ENCODE measurements at regions of chr20 and their contacts with region 1.

Region 1: DNA sequence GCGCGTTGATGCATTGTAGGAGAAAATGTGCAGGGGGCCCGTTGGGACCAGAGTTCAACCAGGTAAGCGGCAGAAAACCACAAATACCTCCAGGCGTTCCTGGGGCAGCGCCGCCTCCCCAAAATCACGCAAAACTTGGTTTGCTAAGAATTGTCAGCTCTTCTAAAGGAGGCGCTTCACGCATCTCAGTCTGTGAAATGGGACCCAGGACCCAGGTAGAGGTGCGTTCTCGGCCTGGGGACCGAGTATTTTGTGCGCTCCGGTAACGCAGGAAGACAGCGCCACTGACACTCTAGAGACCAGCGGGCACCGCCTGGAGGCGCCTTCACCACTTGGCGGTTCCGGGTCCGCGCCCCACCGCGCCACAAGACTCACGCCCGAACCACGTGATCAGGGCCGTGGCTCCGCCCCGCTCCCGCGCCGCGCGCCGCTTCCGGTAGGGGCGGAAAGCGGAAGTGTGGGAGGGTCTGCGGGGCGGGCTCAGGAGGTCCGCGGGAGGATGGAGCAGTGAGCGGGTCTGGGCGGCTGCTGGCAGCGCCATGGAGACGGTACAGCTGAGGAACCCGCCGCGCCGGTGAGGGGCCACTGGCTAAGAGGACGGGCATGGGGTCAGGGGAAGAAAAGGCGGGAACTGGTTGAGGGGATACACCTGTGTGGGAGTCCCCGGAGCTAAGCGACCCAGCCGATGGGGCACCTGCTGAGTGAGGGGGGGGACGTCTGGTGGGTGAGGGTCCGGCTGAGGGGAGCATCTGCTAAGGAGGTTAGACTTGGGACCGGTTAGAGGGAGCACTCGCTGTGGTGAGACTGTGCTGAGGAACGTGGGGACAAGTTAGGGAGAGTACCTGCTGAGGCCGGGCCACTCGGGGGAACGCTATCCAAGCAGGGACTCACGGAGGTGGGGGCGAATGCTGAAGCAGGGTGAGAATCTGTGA is at the start of gene STK4:
- DNase-seq: peak; percentile 88 to 95 (median 93)
- H3K4me3 ChIP-seq: peak within 1 kb of the TSS; percentile 60 to 98 (median 90)
- H3K27ac ChIP-seq: peak within 1 kb of the TSS; percentile 32 to 98 (median 91)
- H3K27me3 ChIP-seq: no peaks in the 10 kb centered on the region
- CTCF ChIP-seq: peak; percentile 49 to 89 (median 78)
- total RNA-seq, gene STK4: 31.0 to 66.4 (median 42.5) TPM

Region 2: GRCh38 chr20:44747166-44748004 is 218.9 kb before region 1 on chr20:
- intact Hi-C with region 1: loop called in 1 of 2 experiments (anchors 10 kb)
- DNase-seq: peak; percentile 61 to 94 (median 84)
- H3K4me3 ChIP-seq: peak overlapping the region in 1 of 59 donors; percentile 2
- H3K27ac ChIP-seq: peak overlapping the region in 5 of 59 donors; percentile 1 to 50 (median 31)
- H3K27me3 ChIP-seq: peaks cover 0 to 13% (median 0%) of the 10 kb centered on the region in 45 donors
- CTCF ChIP-seq: peak; percentile 52 to 83 (median 72)

Region 3: GRCh38 chr20:44885392-44886265 is 80.7 kb before region 1 on chr20 and contains the start of gene YWHAB:
- intact Hi-C with region 1: loop called (anchors 5 kb)
- DNase-seq: peak; percentile 90 to 98 (median 96)
- H3K4me3 ChIP-seq: peak within 1 kb of the TSS; percentile 70 to 100 (median 97)
- H3K27ac ChIP-seq: peak within 1 kb of the TSS; percentile 26 to 97 (median 92)
- H3K27me3 ChIP-seq: no peaks in the 10 kb centered on the region
- CTCF ChIP-seq: peak in 12 of 56 donors; percentile 5 to 43 (median 14)
- total RNA-seq, gene YWHAB: 122 to 473 (median 343) TPM

Region 4: DNA sequence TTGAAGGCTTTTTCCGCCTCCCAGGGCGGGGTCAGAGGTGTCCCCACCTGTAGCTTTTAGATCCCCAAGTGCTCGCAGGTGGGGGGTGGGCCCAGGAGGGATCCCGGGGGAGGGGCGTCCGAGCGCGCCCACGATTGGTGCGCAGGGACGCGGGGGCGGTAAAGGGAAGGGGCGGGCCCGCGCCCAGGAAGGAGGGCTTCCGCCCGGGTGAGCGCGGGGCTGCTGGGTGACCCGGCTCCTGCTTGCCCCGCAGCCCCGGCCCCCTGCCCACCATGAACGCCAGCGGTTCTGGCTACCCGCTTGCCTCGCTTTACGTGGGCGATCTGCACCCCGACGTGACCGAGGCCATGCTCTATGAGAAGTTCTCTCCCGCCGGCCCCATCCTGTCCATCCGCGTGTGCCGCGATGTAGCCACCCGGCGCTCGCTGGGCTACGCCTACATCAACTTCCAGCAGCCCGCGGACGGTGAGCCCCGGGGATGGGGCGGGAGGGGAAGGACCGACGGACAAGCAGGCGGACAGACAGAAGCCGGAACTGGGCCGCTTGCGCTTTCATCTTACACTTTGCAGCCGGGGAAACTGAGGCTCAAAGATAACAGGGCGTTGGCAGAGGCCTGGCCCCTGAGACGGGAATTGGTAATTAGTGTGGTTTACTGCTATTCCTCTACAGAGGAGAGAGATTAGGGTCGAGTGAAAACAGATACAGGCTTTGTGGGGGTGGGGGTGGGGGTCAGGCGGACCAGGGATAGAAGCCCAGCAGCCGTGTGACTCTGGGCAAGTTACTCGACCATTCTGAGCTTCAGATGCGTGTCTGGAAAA is 56.2 kb before region 1 on chr20 and contains the start of gene PABPC1L:
- intact Hi-C with region 1: loop called in 1 of 2 experiments (anchors 5 kb)
- DNase-seq: peak in 5 of 10 donors; percentile 5 to 65 (median 19)
- H3K4me3 ChIP-seq: peak within 1 kb of the TSS; percentile 43 to 84 (median 68)
- H3K27ac ChIP-seq: peak within 1 kb of the TSS in 3 of 59 donors; percentile 15 to 53 (median 38)
- H3K27me3 ChIP-seq: no peaks in the 10 kb centered on the region
- CTCF ChIP-seq: no peak
- total RNA-seq, gene PABPC1L: 5.6 to 24.7 (median 14.3) TPM

Region 5: GRCh38 chr20:45044084-45044573 is 77.8 kb after region 1 on chr20:
- intact Hi-C with region 1: loop called in 1 of 2 experiments (anchors 10 kb)
- DNase-seq: peak in 1 of 10 donors; percentile 50
- H3K4me3 ChIP-seq: peak overlapping the region in 1 of 59 donors; percentile 12
- H3K27ac ChIP-seq: peak overlapping the region in 12 of 59 donors; percentile 26 to 62 (median 45)
- H3K27me3 ChIP-seq: no peaks in the 10 kb centered on the region
- CTCF ChIP-seq: peak; percentile 72 to 98 (median 91)

Region 6: DNA sequence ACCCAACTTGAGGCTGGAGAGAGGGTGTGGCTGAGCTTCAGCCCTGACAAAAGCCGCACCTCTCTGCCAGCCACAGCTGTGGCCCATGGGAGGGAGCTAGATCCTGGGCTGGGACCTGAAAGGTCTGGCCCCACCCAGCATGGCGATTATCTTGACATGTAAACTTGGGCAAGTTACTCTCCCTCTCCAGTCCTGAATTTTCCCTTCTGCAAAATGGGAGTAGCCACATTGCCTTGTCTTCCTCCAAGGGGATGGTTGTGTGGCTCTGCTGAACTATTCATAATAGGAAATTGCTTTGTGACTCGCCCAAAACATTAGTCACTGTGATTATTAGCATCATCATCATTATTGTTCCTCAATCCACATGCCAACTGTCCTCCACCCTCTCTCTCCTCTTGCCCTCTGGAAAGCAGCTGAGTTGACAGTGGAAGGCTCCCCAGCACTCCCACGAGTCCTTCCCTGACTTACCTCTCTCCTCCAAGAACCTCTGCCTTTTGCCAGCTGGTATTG is 317.3 kb after region 1 on chr20:
- intact Hi-C with region 1: no loop called
- DNase-seq: no peak
- H3K4me3 ChIP-seq: no peak overlapping the region
- H3K27ac ChIP-seq: no peak overlapping the region
- H3K27me3 ChIP-seq: peaks cover 0 to 6% (median 0%) of the 10 kb centered on the region in 45 donors
- CTCF ChIP-seq: no peak

Region 7: DNA sequence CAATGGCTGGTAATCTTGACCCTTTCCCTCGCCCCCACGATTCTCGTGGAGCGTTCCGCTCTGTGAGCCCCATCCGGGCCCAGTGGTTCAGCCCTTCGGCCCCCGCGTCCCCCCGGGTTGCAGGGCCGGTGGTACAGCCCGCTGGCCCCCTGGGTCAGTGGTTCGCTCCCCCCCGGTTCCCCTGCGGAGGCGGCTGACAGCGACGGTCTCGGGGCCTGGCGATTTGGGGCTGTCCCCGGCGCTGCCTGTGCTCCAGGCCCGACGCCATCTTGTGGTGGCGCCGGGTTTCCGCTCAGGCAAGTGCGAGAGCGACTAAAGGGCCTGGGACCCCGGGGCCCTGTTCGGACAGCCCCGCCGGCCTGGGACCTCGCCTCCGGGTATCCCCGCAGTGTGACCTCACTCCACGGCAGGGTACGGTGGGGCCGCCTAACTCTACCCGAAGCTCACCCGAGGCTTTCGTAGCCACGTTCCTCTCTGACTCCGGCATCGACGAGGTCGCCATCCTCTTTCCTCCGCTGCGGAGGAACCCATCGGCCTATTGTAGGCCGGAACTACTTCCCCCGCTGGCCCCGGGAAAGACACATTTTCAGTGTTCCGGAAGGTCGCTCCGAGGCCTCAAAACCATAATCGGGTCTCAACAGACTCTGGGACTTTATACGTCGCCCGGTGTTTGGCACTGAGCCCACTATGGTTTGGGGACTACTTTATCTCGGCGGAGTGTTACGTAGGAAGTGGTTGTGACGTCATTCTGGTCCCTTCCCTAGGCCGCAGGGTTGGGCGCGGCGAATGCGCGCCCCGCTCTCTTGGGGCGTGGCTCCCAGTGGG is 1005.6 kb after region 1 on chr20 and contains the start of gene ZNF335:
- intact Hi-C with region 1: loop called in 1 of 2 experiments (anchors 10 kb)
- DNase-seq: peak; percentile 88 to 97 (median 94)
- H3K4me3 ChIP-seq: peak within 1 kb of the TSS; percentile 63 to 100 (median 90)
- H3K27ac ChIP-seq: peak within 1 kb of the TSS; percentile 97 to 100 (median 100)
- H3K27me3 ChIP-seq: no peaks in the 10 kb centered on the region
- CTCF ChIP-seq: peak in 53 of 56 donors; percentile 15 to 73 (median 54)
- total RNA-seq, gene ZNF335: 20.9 to 40.0 (median 26.7) TPM